Transverse colon (tissue), 4 donors: ENCODE measurements at regions of chr5 and their contacts with region 1.

Region 1: GRCh38 chr5:123371575-123372179 is 51.5 kb downstream of the CEP120 start:
- DNase-seq: peak; percentile 56
- H3K4me3 ChIP-seq: no peak overlapping the region
- H3K27ac ChIP-seq: no peak overlapping the region
- H3K4me1 ChIP-seq: no peaks in the 10 kb centered on the region
- H3K27me3 ChIP-seq: no peaks in the 10 kb centered on the region
- CTCF ChIP-seq: peak; percentile 32 to 60 (median 43)
- EP300 ChIP-seq: no peak
- POLR2A ChIP-seq: no peak

Region 2: GRCh38 chr5:122500245-122501075 is 871.2 kb before region 1 on chr5:
- in situ Hi-C with region 1: loop called in 2 of 4 experiments (anchors 25 kb)
- intact Hi-C with region 1: loop called (anchors 10 kb)
- DNase-seq: no peak
- H3K4me3 ChIP-seq: no peak overlapping the region
- H3K27ac ChIP-seq: no peak overlapping the region
- H3K4me1 ChIP-seq: peaks cover 0 to 3% (median 0%) of the 10 kb centered on the region in 4 donors
- H3K27me3 ChIP-seq: no peaks in the 10 kb centered on the region
- CTCF ChIP-seq: peak in 3 of 5 experiments; percentile 15 to 36 (median 27)
- EP300 ChIP-seq: no peak
- POLR2A ChIP-seq: no peak

Region 3: GRCh38 chr5:122896598-122897282 is 474.9 kb before region 1 on chr5:
- in situ Hi-C with region 1: no loop called
- intact Hi-C with region 1: loop called (anchors 10 kb)
- DNase-seq: no peak
- H3K4me3 ChIP-seq: no peak overlapping the region
- H3K27ac ChIP-seq: no peak overlapping the region
- H3K4me1 ChIP-seq: no peaks in the 10 kb centered on the region
- H3K27me3 ChIP-seq: no peaks in the 10 kb centered on the region
- CTCF ChIP-seq: peak; percentile 38 to 60 (median 48)
- EP300 ChIP-seq: no peak
- POLR2A ChIP-seq: no peak

Region 4: DNA sequence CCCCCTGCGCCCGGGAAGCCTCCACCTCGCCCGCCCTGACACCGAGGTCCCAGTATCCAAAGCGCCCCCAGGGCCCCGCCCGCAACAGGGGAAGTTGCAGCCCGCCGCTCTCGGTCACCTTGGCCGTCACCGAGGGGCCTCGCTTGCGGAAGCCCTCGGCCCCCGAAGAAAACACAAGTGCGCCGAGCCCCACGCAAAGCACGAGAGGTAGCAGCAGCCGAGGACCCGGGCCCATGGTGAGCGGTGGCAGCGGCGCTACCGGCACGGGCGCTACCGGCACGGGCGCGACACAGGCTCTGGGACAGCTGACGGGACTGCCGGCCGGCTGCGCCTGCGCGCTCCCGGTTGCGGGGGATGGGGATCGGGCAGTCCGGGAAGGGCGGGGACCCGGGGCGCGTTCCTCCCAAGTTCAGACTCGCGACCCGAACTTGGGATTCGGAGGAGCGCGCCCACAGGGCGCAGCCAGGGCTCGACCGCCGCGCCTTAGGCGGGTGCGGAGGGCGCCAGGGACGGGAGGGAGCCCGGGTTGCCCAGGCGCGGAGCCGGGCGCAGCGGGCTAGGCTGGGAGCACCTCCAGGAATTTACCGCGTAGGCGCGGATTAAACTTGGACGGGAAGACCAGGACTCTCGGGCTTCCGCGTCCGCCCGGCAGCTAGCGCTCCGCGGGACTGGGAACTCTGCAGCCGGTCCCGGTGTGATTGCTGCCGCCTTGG is 335.1 kb before region 1 on chr5 and contains the start of gene PPIC:
- in situ Hi-C with region 1: no loop called
- intact Hi-C with region 1: loop called (anchors 10 kb)
- DNase-seq: peak; percentile 91
- H3K4me3 ChIP-seq: peak within 1 kb of the TSS; percentile 38 to 73 (median 68)
- H3K27ac ChIP-seq: peak within 1 kb of the TSS; percentile 91 to 93 (median 92)
- H3K4me1 ChIP-seq: peaks cover 0 to 16% (median 11%) of the 10 kb centered on the region in 4 donors
- H3K27me3 ChIP-seq: no peaks in the 10 kb centered on the region
- CTCF ChIP-seq: no peak
- EP300 ChIP-seq: peak; percentile 0
- POLR2A ChIP-seq: peak; percentile 84
- total RNA-seq, gene PPIC: 10.1 to 58.0 (median 38.8) TPM

Region 5: GRCh38 chr5:123412206-123412605 is 40.5 kb after region 1 on chr5:
- in situ Hi-C with region 1: no loop called
- intact Hi-C with region 1: no loop called
- DNase-seq: no peak
- H3K4me3 ChIP-seq: no peak overlapping the region
- H3K27ac ChIP-seq: no peak overlapping the region
- H3K4me1 ChIP-seq: no peaks in the 10 kb centered on the region
- H3K27me3 ChIP-seq: no peaks in the 10 kb centered on the region
- CTCF ChIP-seq: no peak
- EP300 ChIP-seq: no peak
- POLR2A ChIP-seq: no peak